AG04449 (cell line): ENCODE measurements at regions of chr19 and their contacts with region 1.

Region 1: DNA sequence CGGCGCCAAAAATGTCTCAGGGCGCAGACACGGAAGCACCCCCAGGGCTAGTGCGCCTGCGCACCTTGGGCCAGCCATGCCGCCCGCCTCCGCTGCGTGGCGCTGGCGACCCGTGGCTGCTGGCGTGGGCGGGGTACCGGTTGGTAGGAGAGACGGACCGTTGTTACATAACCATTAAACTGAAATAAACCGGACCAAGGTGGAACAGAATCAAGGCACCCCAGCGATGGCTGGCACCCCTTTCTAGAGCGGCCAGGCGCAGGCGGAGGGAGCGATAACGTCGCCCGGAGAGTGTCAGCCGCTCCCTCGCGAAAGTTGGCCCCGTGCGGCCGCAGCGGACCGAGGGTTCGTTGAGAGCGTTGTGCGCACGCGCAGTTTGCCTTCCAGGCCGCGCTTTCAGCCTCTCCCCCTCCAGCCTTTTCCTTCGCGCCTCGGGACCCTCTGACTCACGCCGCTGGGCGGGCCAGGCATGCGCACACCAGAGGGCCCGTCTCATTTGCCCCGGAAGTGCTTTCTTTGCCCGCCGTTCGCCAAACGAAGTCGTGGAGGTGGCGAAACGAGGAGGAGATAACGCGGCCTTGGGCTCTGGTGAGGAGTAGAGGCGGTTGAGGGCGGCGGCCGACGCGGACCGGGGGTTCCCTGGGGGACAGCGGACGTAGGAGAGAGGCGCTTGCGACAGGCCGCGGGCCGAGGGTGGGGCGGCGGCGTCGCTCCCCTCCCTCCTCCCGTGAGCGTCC is at the starts of genes PLEKHJ1 and SF3A2:
- DNase-seq: peak; percentile 70
- H3K4me3 ChIP-seq: peak within 1 kb of the TSS; percentile 83
- CTCF ChIP-seq: peak; percentile 99

Region 2: DNA sequence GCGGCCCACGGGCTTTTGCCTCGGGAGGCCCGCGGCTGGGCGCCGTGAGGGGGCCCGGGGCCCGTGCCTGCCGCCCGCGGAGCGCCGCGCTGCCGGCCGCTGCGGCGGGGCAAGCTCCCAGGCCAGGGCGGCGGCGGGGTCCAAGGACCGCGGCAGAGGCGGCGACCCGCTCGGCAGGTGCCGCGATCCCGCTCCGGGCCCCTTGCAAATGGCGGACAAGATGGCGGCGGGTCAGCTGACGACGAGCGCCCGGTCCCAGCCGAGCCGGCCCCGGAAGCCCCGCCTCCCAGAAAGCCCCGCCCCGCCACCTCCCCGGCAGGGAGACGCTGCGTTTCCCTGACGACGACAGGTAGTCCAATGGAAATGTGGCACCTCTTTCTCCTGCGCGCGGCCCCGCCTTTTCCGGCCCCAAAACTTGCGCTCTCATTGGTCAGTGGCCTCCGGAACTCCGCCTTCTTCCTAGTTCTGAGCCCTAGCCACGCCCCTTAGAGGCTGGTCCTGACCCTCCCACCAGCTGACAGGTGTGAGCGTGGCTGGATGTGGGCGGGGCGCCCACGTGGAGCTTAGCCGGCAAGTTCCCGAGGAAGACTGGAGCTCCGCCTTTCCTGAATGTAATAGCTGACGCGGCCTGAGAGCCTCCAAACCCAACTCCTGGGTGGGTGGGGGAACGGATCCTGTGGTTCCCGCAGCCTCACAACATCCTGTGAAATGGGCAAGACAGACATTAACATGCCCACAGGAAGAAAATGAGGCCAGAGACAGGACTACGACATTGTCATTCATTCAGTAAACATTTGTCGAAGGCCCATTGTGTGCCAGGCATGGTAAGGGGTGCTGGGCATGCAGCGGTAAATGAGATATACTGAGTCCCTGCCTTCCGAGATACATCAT is 84.9 kb before region 1 on chr19 and contains the start of gene AP3D1:
- CTCF ChIA-PET with region 1: interaction called, 11 read pairs
- POLR2A ChIA-PET with region 1: interaction called, 3 read pairs
- DNase-seq: peak; percentile 96
- H3K4me3 ChIP-seq: peak within 1 kb of the TSS; percentile 92
- CTCF ChIP-seq: no peak

Region 3: DNA sequence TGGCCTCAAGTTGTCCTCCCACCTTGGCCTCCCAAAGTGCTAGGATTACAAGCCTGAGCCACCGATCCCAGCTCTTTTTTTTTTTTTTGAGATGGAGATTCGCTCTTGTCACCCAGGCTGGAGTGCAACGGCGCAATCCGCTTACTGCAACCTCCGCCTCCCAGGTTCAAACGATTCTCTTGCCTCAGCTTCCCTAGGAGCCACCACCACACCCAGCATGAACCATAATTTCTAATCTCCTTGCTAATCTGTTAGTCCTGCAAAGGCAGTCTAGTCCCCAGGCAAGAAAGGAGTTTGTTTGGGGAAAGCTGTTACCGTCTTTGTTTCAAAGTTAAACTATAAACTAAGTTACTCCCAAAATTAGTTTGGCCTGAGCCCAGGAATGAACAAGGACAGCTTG is 77.9 kb before region 1 on chr19:
- CTCF ChIA-PET with region 1: interaction called, 12 read pairs
- POLR2A ChIA-PET with region 1: no interaction called
- DNase-seq: no peak
- H3K4me3 ChIP-seq: no peak overlapping the region
- CTCF ChIP-seq: no peak

Region 4: DNA sequence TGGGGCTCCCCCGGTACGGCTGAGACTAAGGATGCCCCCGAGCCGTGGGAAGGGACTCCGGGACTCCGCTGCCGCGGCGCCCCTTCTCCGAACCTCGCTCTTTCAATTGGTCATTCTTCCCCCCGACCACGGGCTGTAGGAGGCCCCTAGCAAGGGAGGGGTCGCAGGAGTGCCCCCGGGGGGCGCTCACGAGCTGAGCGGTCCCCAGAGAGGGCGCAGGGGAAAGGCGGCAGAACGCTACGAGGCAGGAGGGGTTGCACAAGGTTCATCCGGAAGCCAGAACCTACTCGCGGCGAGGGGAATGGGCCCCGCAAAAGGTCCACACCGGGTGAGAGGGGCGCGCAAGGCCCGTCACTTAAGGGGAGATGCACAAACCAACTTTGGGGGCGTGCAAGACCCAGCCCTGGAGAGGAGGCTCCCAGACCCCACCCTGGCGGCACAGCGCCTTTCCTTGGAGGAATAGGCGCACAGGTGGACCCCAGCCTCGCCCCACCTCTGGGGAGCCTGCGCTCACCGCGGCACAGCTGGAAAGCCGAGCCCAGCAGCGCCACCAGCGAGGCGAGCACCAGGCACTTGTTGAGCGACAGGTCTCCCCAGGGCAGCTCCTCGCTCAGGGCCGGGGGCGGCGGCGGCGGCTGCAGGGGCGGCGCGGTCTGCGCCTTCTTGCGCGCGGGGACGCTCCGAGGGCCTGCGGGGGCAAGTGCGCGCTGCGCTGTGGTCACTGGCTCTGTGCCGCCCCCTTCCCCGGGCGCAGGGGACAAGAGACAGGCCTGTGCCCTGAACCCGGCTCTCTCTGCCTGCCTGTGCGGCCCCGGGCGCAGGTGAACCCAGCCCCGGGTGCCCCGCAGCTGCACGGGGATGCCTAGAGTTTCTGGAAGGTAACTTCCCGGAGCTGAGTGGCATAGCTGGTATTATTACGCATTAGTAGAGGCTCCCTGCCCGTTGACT is 16.9 kb after region 1 on chr19:
- CTCF ChIA-PET with region 1: interaction called, 24 read pairs
- POLR2A ChIA-PET with region 1: interaction called, 3 read pairs
- DNase-seq: no peak
- H3K4me3 ChIP-seq: no peak overlapping the region
- CTCF ChIP-seq: peak; percentile 11

Region 5: GRCh38 chr19:2261438-2262172 is 25.1 kb after region 1 on chr19:
- CTCF ChIA-PET with region 1: interaction called, 24 read pairs
- POLR2A ChIA-PET with region 1: no interaction called
- DNase-seq: no peak
- H3K4me3 ChIP-seq: no peak overlapping the region
- CTCF ChIP-seq: peak; percentile 38